ENCODE measurements at regions of chr22 and their contacts with region 1.

Region 1: GRCh38 chr22:30262917-30263741 is 3.5 kb downstream of the OSM start:
- DNase-seq: peak; percentile 69
- H3K4me3 Mint-ChIP-seq: peak overlapping the region; percentile 96
- H3K27ac Mint-ChIP-seq: peak overlapping the region; percentile 77
- H3K4me1 Mint-ChIP-seq: peaks cover 32% of the 10 kb centered on the region
- H3K27me3 Mint-ChIP-seq: no peaks in the 10 kb centered on the region

Region 2: DNA sequence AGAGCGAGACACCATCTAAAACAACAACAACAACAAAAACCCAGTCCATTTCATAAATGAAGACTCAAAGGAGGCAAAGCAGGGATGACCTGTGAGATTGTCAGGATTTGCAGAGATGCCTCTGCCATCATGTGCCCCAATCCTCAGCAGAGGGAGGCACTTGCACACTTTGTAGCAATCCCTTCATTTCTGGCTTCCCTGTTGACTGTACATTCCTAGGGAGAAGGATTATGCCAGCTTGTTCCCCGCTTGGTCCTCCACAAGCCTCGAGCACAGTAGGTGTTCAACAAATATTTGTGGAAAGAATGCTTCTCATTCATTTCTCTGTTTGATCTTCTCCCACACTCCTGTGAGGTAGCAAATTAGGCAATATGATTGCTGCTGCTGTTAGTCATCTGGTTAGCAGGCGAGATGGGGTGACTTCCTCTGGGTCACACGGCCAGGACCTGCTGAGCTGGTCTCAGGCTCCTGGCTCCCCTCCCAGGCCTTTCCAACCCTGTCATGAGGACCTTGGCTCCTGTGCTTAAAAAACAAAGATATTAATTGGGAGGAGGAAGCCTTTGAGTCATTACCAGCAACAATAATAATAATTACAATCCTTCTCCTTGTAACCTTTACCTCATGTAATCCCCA is 50.6 kb before region 1 on chr22:
- intact Hi-C with region 1: no loop called
- DNase-seq: no peak
- H3K4me3 Mint-ChIP-seq: no peak overlapping the region
- H3K27ac Mint-ChIP-seq: peak overlapping the region; percentile 80
- H3K4me1 Mint-ChIP-seq: peaks cover 45% of the 10 kb centered on the region
- H3K27me3 Mint-ChIP-seq: no peaks in the 10 kb centered on the region

Region 3: GRCh38 chr22:30245985-30246901 is 16.9 kb before region 1 on chr22 and contains the start of gene LIF:
- intact Hi-C with region 1: loop called (anchors 2 kb)
- DNase-seq: peak; percentile 65
- H3K4me3 Mint-ChIP-seq: peak within 1 kb of the TSS; percentile 99
- H3K27ac Mint-ChIP-seq: peak within 1 kb of the TSS; percentile 99
- H3K4me1 Mint-ChIP-seq: peaks cover 66% of the 10 kb centered on the region
- H3K27me3 Mint-ChIP-seq: no peaks in the 10 kb centered on the region
- total RNA-seq, gene LIF: 919 and 932 TPM in 2 replicates

Region 4: DNA sequence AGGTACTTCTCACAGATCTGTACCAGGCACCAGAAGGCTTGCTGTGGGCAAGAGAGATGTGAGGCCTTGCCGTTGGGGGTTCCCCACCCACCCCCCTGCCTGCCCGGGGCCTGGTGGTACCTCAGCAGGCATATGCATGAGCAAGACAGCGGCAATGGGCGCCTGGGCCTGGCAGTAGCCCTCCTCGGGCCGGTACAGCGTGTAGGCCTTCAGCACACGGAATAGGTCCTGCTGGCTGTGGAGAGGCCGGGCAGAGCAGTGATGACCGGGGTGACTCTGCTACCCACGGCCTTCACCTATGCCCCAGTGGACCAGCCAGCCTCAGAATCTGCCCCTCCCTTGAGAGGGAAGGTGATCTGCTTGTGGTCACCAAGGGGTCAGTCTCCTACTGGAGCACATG is 31.7 kb after region 1 on chr22:
- intact Hi-C with region 1: no loop called
- DNase-seq: no peak
- H3K4me3 Mint-ChIP-seq: no peak overlapping the region
- H3K27ac Mint-ChIP-seq: no peak overlapping the region
- H3K4me1 Mint-ChIP-seq: peaks cover 31% of the 10 kb centered on the region
- H3K27me3 Mint-ChIP-seq: no peaks in the 10 kb centered on the region

Region 5: DNA sequence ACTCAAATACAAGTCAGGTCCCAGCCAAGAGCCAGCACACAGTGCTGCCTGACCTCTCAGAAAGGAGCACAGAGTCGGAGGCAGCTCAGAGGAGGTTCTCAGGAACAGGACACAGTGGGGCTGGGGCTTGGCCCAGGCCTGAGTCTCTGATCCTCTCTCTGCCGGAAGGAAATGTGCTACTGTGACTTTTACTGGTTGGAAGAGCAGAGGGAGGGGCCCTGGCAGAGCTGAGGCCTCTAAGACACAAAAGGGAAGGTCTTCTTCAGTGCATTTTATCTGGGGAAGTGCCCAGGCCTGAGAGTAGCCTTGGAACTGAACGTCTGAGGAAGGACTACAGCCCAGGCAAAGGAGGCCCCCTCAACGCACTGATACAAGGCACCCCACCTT is 42.4 kb after region 1 on chr22:
- intact Hi-C with region 1: loop called (anchors 10 kb)
- DNase-seq: peak; percentile 65
- H3K4me3 Mint-ChIP-seq: peak overlapping the region; percentile 70
- H3K27ac Mint-ChIP-seq: peak overlapping the region; percentile 87
- H3K4me1 Mint-ChIP-seq: peaks cover 89% of the 10 kb centered on the region
- H3K27me3 Mint-ChIP-seq: no peaks in the 10 kb centered on the region

Region 6: DNA sequence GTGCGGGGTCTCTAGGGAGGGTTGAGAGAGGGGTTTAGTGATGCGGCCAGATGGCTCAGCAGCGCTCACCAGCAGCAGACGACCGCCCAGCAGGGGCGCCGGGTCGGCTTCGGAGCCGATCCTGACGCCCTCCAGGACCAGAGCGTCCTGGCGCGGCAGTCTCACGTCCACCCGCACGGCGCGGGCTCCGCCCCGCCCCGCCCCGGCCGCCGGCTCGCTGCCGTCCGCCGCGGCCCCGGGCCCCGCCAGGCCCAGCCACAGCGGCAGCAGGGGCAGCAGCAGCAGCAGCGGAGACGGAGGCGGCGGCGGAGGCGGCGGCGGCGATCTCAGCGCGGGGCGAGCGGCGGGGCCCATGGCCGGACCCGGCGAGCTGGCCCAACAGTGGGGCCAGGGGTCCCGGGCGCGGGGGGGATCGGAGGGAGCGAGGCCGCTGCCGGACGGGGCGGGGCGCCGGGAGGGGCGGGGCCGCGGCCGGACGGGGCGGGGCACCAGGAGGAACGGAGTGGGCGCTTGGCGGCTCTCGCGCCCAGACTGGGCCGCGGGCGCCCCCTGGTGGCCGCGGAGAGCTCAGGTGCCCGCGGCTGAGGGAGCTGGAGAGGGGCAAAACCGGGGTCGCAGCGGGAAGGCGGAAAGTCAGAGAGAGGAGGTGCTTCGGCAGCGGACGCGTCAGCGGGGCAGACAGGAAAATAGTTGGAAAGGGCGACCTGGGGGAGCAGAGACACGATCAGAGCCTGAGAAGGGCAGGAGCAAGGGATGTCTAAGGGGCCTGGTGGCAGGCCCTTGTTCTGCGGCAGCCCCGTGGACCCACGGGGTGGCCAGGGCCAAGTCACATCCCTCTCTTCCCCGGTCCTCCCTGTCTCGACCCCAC is 124.1 kb after region 1 on chr22 and contains the start of gene RNF215:
- intact Hi-C with region 1: loop called (anchors 2 kb)
- DNase-seq: peak; percentile 76
- H3K4me3 Mint-ChIP-seq: peak within 1 kb of the TSS; percentile 84
- H3K27ac Mint-ChIP-seq: peak within 1 kb of the TSS; percentile 69
- H3K4me1 Mint-ChIP-seq: peaks cover 23% of the 10 kb centered on the region
- H3K27me3 Mint-ChIP-seq: no peaks in the 10 kb centered on the region
- total RNA-seq, gene RNF215: 17.2 and 19.3 TPM in 2 replicates

Region 7: DNA sequence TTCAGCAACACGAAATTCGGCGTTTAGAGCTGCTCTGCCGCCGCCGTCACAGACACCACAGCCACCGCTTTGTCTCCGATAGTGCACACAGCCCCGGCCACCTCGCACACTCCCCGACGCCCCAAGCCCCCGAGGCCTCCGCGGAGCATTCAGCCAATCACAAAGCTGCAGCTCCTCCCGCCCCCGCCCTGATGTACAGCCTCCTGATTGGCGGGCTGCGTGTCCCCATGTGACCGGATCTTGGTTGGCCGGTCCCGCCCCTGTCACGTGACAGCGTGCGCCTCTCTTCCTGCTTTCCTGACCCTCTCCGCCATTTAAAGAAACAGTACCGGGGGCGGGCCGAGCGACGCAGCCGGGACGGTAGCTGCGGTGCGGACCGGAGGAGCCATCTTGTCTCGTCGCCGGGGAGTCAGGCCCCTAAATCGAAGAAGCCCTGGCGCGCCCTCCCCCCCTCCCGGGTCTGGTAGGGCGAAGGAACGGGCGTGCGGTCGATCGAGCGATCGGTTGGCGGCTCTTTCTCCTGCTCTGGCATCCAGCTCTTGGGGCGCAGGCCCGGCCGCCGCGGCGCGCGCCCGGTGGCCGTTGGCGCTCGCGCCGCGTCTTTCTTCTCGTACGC is 705.9 kb after region 1 on chr22 and contains the start of gene TUG1:
- intact Hi-C with region 1: loop called (anchors 10 kb)
- DNase-seq: peak; percentile 97
- H3K4me3 Mint-ChIP-seq: peak within 1 kb of the TSS; percentile 86
- H3K27ac Mint-ChIP-seq: peak within 1 kb of the TSS; percentile 93
- H3K4me1 Mint-ChIP-seq: peaks cover 25% of the 10 kb centered on the region
- H3K27me3 Mint-ChIP-seq: no peaks in the 10 kb centered on the region
- total RNA-seq, gene TUG1: 66.9 and 68.2 TPM in 2 replicates